GM12878 (cell line): ENCODE measurements at regions of chr12 and their contacts with region 1.

Region 1: DNA sequence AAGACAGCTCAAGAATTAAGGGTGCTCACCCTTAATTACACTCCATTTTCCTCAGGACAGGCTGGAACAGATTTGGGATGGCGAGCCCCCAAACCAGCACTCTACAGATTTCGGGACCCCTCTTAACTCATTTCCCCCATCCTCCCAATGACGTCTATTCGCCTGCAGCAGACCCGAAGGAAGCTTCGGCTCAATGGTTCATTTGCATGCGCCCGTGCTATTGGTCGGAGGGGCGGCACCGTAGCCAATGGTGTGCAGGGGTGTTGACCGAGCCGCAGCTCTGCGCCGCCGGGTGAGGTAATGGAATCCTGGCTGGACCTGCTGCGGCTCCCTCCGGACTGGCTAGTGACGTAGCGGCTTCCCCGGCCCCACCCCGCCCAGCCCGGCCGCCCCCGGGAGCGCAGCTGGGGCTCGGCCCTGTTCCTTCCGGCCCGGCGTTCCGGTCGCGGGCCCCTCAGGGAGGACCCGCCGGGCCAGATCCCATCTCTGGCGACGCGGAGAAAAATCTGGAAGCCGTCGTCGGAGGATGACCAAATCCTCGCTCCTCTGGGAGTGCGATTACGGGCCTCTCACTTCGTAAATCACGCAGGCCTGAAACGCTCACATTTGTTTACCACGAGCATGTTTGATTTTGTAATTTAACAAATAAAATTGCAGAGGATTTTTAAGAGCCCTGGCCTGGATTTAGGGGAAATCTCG is 18.3 kb upstream of the NR4A1 start:
- DNase-seq: peak; percentile 55
- ATAC-seq: peak; percentile 94
- H3K4me3 ChIP-seq: peak overlapping the region; percentile 51; the same call in 1 of the 2 replicates
- H3K27ac ChIP-seq: no peak overlapping the region
- H3K4me1 ChIP-seq: peaks cover 17% of the 10 kb centered on the region
- H3K27me3 ChIP-seq: no peaks in the 10 kb centered on the region; a peak in 1 of 4 replicates
- CTCF ChIP-seq: no peak
- EP300 ChIP-seq: no peak
- POLR2A ChIP-seq: peak; percentile 62
- RAD21 ChIP-seq: no peak

Region 2: DNA sequence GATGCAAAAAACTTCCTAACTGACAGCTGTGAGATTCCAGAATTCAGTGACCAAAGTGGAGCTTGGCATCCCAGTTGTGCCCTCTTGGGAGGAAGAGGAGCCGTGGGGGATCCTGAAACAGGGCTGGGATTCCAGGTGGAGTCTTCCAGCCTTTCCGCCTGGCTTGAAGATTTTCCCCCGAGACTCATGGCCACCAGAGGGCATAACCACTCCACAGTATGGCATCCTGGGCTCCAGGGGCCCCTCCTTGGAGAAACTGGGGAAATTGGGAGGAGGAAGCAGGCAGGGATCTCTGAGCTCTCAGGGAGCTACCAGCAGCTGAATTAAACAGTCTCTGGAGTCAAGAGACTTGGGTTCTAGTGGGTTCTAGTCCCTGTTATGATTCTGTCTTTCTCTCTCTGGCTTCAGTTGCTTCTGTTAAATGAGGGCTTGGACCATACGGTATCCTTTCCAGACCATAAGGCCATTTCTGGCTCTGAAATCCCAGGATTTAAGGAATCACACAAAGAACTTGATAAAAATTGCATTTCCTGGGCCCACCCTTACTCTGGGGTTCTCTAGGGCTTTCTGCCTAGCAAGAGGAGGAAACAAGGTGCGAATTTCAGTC is 28.8 kb before region 1 on chr12:
- CTCF ChIA-PET with region 1: interaction called, 412 read pairs
- POLR2A ChIA-PET with region 1: no interaction called
- RAD21 ChIA-PET with region 1: interaction called, 131 read pairs
- SMC1A ChIA-PET with region 1: no interaction called
- in situ Hi-C with region 1: no loop called
- intact Hi-C with region 1: no loop called
- DNase-seq: no peak
- ATAC-seq: no peak
- H3K4me3 ChIP-seq: no peak overlapping the region
- H3K27ac ChIP-seq: no peak overlapping the region
- H3K4me1 ChIP-seq: peaks cover 11% of the 10 kb centered on the region
- H3K27me3 ChIP-seq: peaks cover 9 to 21% of the 10 kb centered on the region in 2 experiments; a peak in 3 of 4 replicates
- CTCF ChIP-seq: peak; percentile 37 to 68 (median 59); a peak in 5 of 6 replicates
- EP300 ChIP-seq: no peak
- POLR2A ChIP-seq: no peak
- RAD21 ChIP-seq: peak; percentile 56

Region 3: GRCh38 chr12:52050761-52051541 is 18.0 kb after region 1 on chr12 and contains the start of gene NR4A1:
- CTCF ChIA-PET with region 1: interaction called, 25 read pairs
- POLR2A ChIA-PET with region 1: interaction called, 24 read pairs
- RAD21 ChIA-PET with region 1: interaction called, 44 read pairs
- SMC1A ChIA-PET with region 1: interaction called, 24 read pairs
- in situ Hi-C with region 1: no loop called
- intact Hi-C with region 1: no loop called
- DNase-seq: peak; percentile 49
- ATAC-seq: peak; percentile 85
- H3K4me3 ChIP-seq: peak within 1 kb of the TSS; percentile 76
- H3K27ac ChIP-seq: peak within 1 kb of the TSS; percentile 67
- H3K4me1 ChIP-seq: peaks cover 18% of the 10 kb centered on the region
- H3K27me3 ChIP-seq: no peaks in the 10 kb centered on the region
- CTCF ChIP-seq: peak in 2 of 3 experiments; percentile 5 to 31; a peak in 2 of 6 replicates
- EP300 ChIP-seq: peak; percentile 87 to 88
- POLR2A ChIP-seq: peak; percentile 85
- RAD21 ChIP-seq: no peak
- polyA plus RNA-seq, gene NR4A1: 0.05 TPM in 1 of 2 experiments, not detected in the other